HAP-1 (cell line): ENCODE measurements at regions of chr22 and their contacts with region 1.

Region 1: DNA sequence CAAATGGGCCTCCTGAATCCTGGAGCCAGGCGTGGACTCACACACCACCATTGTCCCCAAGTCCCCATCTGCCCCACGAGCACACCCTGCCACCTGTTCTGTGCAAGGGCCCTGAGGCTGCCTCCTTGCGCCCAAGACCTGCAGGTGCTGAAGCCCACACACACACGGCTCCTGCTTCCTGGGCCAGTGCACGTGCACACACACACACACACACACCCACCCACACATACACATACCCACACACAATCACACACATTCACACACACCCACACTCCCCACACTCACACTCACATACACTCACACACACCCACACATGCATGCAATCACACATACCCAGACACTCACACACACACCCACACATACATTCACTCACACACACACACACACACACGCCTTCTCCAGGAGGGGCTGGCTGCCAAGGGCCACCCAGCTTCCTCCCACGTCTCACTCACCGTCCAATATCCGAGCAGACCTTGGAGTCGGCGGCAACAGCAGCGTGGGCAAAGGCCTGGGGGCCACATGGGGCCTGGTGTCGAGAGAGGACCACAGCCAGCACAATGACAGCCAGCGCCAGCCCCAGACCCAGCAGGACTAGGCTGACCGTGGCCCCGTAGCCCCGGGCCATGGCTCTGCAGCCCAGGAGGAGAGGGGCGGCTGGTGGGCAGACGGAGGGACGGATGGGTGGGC is 638 bp downstream of the GGT5 start:
- DNase-seq: no peak
- H3K4me3 ChIP-seq: no peak overlapping the region
- H3K4me1 ChIP-seq: no peaks in the 10 kb centered on the region
- H3K27me3 ChIP-seq: no peaks in the 10 kb centered on the region

Region 2: GRCh38 chr22:24189249-24190158 is 54.7 kb before region 1 on chr22:
- in situ Hi-C with region 1: loop called (anchors 10 kb)
- DNase-seq: peak; percentile 48 to 84
- H3K4me3 ChIP-seq: no peak overlapping the region
- H3K4me1 ChIP-seq: no peaks in the 10 kb centered on the region
- H3K27me3 ChIP-seq: no peaks in the 10 kb centered on the region